ENCODE measurements at regions of chr12 and their contacts with region 1.

Region 1: DNA sequence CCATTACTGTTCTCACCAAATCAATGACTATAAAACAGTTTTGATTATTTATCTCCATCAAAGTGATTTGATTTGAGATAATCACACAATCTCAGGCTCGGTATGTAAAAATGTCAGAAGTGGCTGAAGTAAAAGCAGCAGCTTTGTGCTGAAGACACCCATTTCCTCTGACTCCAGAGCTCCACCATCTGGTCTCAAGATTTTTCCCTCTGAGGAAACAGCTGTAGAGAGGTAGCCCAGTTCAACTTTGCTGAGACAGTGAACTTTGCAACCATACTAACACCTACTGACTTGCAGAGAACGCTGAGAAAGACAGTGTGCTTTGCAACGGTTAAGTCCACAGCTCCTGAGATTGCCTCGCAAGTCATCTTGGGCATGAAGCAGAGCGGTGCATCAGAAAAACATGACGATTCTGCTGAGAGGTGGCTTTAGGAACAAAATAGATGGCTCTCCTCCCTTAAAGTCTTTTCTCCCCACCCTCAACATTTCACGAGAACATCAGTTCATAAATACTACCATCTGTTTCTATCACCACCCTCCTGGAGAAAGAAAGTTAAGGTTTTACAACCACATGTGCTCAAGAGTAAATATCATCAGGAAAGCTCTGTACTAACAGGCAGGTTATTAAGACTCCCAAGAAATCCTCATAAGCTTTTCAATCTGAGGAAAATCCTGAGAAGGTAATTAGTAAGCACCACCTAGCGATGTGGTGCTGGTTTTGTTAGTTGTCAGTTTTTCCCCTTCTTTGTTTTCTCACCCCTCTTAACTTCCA is 34.8 kb downstream of the HIGD1C start:
- DNase-seq: no peak
- H3K4me3 ChIP-seq: no peak overlapping the region
- H3K27ac ChIP-seq: peak overlapping the region; percentile 67 to 78 (median 76)
- H3K4me1 ChIP-seq: peaks cover 25 to 35% (median 32%) of the 10 kb centered on the region in 4 donors
- H3K27me3 ChIP-seq: no peaks in the 10 kb centered on the region
- CTCF ChIP-seq: peak; percentile 61 to 72 (median 64)
- EP300 ChIP-seq: no peak
- POLR2A ChIP-seq: no peak

Region 2: DNA sequence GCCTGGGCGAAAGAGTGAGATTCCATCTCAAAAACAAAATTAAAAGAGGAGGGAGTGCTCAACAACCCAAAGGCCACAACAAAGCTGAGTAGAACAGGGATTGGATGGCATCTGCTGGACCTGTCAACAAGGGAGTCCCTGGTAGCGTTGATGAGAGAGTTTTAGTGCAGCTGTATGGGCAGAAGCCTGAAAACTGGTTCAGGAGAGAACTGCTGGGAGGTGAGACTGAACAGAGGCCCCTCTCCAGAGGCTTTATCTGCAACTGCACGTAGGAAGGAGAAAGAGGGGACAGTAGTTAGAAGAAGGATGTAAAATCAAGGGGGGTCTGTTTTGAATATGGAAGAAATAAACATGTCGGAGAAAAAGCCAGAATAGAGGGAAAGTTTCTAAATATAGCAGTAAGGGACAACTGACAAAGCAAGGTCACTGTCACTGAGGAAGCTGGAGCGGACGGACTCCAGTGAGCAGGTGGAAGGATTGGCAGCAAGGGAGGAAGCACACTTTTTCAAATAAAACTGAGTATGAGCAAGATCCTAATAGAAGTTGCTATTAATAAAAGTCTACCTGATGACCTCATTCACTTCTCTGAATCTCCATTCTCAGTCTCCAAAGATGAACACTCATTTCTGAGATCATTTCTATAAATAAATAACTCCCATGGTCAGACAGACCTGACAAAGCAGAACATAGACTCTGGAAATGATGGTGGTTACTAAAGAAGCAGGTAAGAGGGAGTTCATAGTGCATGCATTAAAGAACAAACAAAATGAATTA is 235.0 kb before region 1 on chr12:
- intact Hi-C with region 1: no loop called
- DNase-seq: no peak
- H3K4me3 ChIP-seq: no peak overlapping the region
- H3K27ac ChIP-seq: no peak overlapping the region
- H3K4me1 ChIP-seq: peaks cover 0 to 4% (median 0%) of the 10 kb centered on the region in 4 donors
- H3K27me3 ChIP-seq: no peaks in the 10 kb centered on the region
- CTCF ChIP-seq: no peak
- EP300 ChIP-seq: no peak
- POLR2A ChIP-seq: no peak

Region 3: GRCh38 chr12:50763639-50764285 is 223.4 kb before region 1 on chr12 and contains the start of gene ATF1:
- intact Hi-C with region 1: loop called (anchors 2 kb)
- DNase-seq: peak; percentile 98
- H3K4me3 ChIP-seq: peak within 1 kb of the TSS; percentile 88 to 100 (median 97)
- H3K27ac ChIP-seq: peak within 1 kb of the TSS; percentile 98 to 99 (median 98)
- H3K4me1 ChIP-seq: peaks cover 21 to 47% (median 43%) of the 10 kb centered on the region in 4 donors
- H3K27me3 ChIP-seq: no peaks in the 10 kb centered on the region
- CTCF ChIP-seq: peak in 1 of 3 experiments; percentile 26
- EP300 ChIP-seq: no peak
- POLR2A ChIP-seq: peak; percentile 75
- total RNA-seq, gene ATF1: 16.6 to 29.1 (median 21.1) TPM

Region 4: DNA sequence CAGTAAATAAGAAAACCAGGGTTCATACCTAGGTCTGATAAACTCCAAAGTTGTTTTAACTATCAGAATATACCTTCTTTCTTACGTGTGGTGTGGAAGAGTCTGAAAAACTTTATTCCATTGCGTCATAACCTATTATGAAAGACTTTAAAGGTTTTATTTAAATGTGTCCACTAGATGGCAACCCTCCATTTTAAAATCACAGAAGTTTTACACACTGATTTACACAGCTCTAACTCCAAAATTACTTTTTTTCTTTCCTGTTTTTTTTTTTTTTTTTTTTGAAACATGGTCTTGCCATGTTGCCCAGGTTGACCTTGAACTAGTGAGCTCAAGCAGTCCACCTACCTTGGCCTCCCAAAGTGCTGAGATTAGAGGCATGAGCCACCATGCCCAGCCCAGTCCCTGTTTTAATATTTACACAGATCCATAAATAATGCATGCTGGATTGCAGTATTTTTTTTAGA is 161.7 kb before region 1 on chr12:
- intact Hi-C with region 1: loop called (anchors 1 kb)
- DNase-seq: no peak
- H3K4me3 ChIP-seq: no peak overlapping the region
- H3K27ac ChIP-seq: peak overlapping the region; percentile 58 to 75 (median 63)
- H3K4me1 ChIP-seq: peaks cover 0 to 15% (median 9%) of the 10 kb centered on the region in 4 donors
- H3K27me3 ChIP-seq: no peaks in the 10 kb centered on the region
- CTCF ChIP-seq: peak; percentile 53 to 60 (median 53)
- EP300 ChIP-seq: no peak
- POLR2A ChIP-seq: no peak

Region 5: DNA sequence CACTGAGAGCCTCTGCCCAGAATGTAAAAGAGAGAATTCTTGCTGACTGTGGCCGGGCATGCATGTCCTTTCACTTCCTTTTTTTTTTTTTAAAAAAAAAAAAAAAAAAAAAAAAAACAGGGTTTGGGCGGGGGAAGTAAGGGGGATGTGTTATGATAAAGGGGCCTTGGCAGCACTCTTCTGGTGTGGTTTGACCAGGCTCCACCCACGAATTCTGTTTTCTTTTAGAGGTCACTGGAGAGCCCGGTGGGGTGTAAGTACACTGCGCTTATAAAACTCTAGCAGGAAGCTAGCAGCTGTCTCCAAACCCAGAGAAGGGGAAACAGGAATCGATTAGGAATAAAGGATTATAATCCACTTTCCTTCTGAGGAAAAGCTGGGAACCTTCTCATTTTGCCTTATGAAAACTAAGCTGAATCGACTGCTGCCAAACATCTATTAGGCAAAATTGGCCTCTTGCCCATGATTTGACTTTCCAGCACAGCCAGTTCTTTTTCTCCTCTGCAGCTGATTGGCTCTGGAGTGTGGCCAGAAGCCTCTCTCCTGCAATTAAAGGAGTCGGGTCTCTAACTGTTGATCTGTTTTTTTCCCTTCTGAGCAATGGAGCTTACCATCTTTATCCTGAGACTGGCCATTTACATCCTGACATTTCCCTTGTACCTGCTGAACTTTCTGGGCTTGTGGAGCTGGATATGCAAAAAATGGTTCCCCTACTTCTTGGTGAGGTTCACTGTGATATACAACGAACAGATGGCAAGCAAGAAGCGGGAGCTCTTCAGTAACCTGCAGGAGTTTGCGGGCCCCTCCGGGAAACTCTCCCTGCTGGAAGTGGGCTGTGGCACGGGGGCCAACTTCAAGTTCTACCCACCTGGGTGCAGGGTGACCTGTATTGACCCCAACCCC is 62.5 kb before region 1 on chr12:
- intact Hi-C with region 1: loop called (anchors 5 kb)
- DNase-seq: peak; percentile 97
- H3K4me3 ChIP-seq: peak overlapping the region; percentile 72 to 91 (median 83)
- H3K27ac ChIP-seq: peak overlapping the region; percentile 87 to 91 (median 88)
- H3K4me1 ChIP-seq: peaks cover 35 to 57% (median 53%) of the 10 kb centered on the region in 4 donors
- H3K27me3 ChIP-seq: no peaks in the 10 kb centered on the region
- CTCF ChIP-seq: no peak
- EP300 ChIP-seq: no peak
- POLR2A ChIP-seq: no peak

Region 6: GRCh38 chr12:51020448-51021182 is 33.5 kb after region 1 on chr12:
- intact Hi-C with region 1: loop called (anchors 5 kb)
- DNase-seq: no peak
- H3K4me3 ChIP-seq: no peak overlapping the region
- H3K27ac ChIP-seq: peak overlapping the region in 2 of 4 donors; percentile 4 to 14
- H3K4me1 ChIP-seq: peaks cover 17 to 49% (median 38%) of the 10 kb centered on the region in 4 donors
- H3K27me3 ChIP-seq: no peaks in the 10 kb centered on the region
- CTCF ChIP-seq: no peak
- EP300 ChIP-seq: no peak
- POLR2A ChIP-seq: no peak

Region 7: DNA sequence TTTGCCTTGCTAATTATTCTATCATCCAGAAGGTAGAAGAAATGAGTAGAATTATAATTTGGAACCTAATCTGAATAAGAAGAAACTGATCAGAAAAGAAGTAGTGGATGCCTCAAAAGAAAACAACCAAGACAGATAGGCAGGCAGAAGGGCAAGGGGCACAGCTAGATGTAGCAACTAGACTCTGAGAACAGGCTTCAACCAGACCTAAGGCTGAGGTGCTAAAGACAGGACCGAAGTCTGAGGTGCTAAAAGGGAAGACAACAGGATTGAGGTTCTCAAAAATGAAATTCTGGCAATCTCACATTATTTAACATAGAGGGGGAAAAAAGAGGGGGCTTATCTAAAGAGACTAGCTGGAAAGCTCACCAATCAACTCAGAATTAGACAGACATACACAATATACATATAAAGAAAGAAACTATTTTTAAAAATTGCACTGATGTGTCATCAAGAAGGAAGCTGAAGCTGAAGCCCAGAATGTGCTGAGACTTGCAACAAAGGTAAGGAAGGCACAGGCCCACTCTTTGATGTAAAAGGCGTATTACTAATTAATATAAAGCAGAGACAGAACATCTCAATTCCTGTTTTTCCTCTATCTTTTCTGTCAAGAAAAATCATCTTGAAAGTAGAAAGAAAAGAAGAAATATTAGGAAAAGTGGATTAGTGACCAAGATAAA is 140.0 kb after region 1 on chr12:
- intact Hi-C with region 1: no loop called
- DNase-seq: no peak
- H3K4me3 ChIP-seq: no peak overlapping the region
- H3K27ac ChIP-seq: no peak overlapping the region
- H3K4me1 ChIP-seq: peaks cover 0 to 8% (median 0%) of the 10 kb centered on the region in 4 donors
- H3K27me3 ChIP-seq: no peaks in the 10 kb centered on the region
- CTCF ChIP-seq: no peak
- EP300 ChIP-seq: no peak
- POLR2A ChIP-seq: no peak

Measured in esophagus muscularis mucosa (tissue), 4 donors.